ENCODE measurements at regions of chr22 and their contacts with region 1.

Region 1: GRCh38 chr22:48393041-48393370 is 1434.7 kb downstream of the BRD1 start:
- DNase-seq: no peak
- H3K4me3 ChIP-seq: no peak overlapping the region
- H3K27ac ChIP-seq: no peak overlapping the region
- H3K4me1 ChIP-seq: no peaks in the 10 kb centered on the region
- H3K27me3 ChIP-seq: peaks cover 0 to 68% of the 10 kb centered on the region in 2 donors
- CTCF ChIP-seq: no peak
- POLR2A ChIP-seq: no peak

Region 2: GRCh38 chr22:48365386-48365785 is 27.6 kb before region 1 on chr22:
- intact Hi-C with region 1: loop called (anchors 1 kb)
- DNase-seq: peak in 1 of 2 donors; percentile 33
- H3K4me3 ChIP-seq: no peak overlapping the region
- H3K27ac ChIP-seq: no peak overlapping the region
- H3K4me1 ChIP-seq: no peaks in the 10 kb centered on the region
- H3K27me3 ChIP-seq: peaks cover 0 to 9% of the 10 kb centered on the region in 2 donors
- CTCF ChIP-seq: no peak
- POLR2A ChIP-seq: no peak

Region 3: DNA sequence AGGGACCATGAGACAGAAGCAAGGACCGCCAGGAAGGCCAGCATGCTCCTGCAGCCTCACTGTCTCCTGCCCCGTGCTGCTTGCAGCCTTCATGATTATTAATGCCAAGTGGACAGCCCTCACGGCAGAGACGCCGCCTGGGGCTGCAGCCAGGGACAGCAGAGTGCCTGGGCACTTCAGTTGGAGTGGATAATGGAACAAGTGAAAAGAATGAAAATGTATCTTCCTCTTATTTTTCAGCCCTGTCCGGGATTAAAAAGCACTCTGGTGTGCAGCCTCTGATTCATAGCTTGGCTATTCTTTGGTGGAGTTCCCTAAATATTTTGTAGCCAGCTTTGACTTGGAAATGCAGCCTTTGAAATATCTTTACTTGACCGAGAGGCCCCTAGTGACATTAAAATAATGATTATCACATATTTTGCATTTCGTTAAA is 30.5 kb after region 1 on chr22:
- intact Hi-C with region 1: no loop called
- DNase-seq: peak in 1 of 2 donors; percentile 12
- H3K4me3 ChIP-seq: no peak overlapping the region
- H3K27ac ChIP-seq: no peak overlapping the region
- H3K4me1 ChIP-seq: no peaks in the 10 kb centered on the region
- H3K27me3 ChIP-seq: peaks cover 0 to 15% of the 10 kb centered on the region in 2 donors
- CTCF ChIP-seq: no peak
- POLR2A ChIP-seq: no peak

Measured in breast epithelium (tissue), 4 donors.